ENCODE measurements at regions of chr1 and their contacts with region 1.

Region 1: GRCh38 chr1:12386130-12386529 is 156.3 kb downstream of the VPS13D start:
- DNase-seq: peak; percentile 48
- H3K4me3 Mint-ChIP-seq: peak overlapping the region; percentile 18
- H3K27ac Mint-ChIP-seq: peak overlapping the region; percentile 87
- H3K4me1 Mint-ChIP-seq: peaks cover 55% of the 10 kb centered on the region
- H3K27me3 Mint-ChIP-seq: no peaks in the 10 kb centered on the region
- CTCF ChIP-seq: no peak

Region 2: DNA sequence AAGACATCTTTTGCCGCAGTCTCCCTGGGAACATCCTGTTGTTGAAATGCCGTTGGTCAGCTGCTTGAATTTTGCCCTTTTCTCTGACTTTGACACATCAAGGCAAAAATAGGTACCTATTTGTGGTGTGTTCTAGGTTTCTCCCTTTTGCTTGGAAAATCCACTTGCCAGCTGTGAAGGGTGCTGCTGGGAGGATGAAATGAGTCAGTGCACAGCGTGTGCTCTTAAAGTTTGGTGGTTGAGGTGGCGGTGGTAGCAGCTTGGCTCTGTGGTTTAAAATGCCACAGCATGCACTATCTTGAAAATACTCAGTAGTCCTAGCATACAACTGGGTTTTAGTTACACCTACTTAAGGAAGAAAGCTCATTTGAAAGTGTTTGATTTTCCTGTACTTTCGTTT is 48.0 kb after region 1 on chr1:
- CTCF ChIA-PET with region 1: no interaction called
- intact Hi-C with region 1: loop called (anchors 1 kb)
- DNase-seq: no peak
- H3K4me3 Mint-ChIP-seq: no peak overlapping the region
- H3K27ac Mint-ChIP-seq: peak overlapping the region; percentile 89
- H3K4me1 Mint-ChIP-seq: peaks cover 46% of the 10 kb centered on the region
- H3K27me3 Mint-ChIP-seq: no peaks in the 10 kb centered on the region
- CTCF ChIP-seq: no peak

Region 3: DNA sequence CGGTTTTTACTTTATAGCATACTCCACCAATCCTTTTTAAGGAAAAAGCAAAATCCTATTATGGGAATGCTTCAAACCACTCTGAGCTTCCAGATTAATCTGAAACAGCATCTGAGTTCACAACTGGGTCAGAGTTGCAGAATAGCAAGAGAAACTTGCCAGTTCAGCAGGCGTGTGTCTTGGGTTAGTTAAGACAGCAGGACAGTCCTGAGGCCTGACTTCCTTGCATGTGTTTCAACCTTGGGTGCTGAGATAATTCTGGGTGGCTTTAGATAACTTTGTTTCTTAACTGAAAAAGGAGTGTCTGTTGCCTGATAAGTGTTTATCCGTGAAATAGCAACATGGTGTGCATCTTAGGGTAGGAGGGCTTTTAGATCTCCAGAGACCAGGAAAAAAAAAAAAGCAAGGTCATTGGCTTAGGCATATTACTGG is 62.6 kb after region 1 on chr1:
- CTCF ChIA-PET with region 1: no interaction called
- intact Hi-C with region 1: no loop called
- DNase-seq: no peak
- H3K4me3 Mint-ChIP-seq: no peak overlapping the region
- H3K27ac Mint-ChIP-seq: no peak overlapping the region
- H3K4me1 Mint-ChIP-seq: peaks cover 13% of the 10 kb centered on the region
- H3K27me3 Mint-ChIP-seq: no peaks in the 10 kb centered on the region
- CTCF ChIP-seq: no peak

Region 4: DNA sequence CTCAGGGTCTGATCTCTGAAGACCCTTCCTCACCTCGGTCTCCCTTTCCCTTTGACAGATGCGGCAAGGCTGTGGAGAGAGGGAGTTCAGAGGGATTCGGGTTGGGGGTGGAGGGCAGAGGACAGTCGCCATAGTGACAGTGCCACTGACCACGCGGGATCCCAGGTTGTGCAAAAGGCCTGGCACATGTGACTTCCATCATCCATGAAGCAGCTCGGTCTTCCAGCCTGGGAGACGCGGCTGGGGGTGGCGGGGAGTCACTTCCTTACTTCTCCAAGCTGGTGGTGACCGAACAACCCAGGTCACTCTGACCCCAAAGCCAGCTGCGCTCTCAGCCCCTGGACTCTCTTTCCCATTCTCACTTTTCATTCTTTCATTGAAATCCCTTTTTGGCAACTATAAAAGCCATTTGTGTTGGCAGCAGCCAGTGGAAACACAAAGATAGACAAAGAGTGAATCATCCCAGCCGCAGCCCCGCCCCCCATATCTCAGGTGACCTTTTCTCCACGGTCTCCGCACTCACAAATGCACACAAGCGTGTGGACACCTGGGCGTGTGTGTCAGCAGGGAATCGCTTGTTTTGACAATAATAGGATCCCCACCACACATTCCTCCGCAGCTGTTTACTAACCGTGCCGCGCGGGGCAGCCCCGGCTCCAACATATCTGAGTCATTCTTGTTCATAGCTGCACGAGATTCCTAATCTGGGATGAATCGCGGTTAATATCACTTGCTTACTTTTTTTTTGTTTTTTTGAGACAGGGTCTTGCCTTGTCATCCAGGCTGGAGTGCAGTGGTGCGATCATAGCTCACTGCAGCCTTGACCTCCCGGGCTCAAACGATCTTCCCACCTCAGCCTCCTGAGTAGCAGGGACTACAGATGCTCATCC is 163.6 kb after region 1 on chr1:
- CTCF ChIA-PET with region 1: no interaction called
- intact Hi-C with region 1: loop called (anchors 10 kb)
- DNase-seq: peak; percentile 86
- H3K4me3 Mint-ChIP-seq: peak overlapping the region; percentile 37
- H3K27ac Mint-ChIP-seq: peak overlapping the region; percentile 94
- H3K4me1 Mint-ChIP-seq: peaks cover 25% of the 10 kb centered on the region
- H3K27me3 Mint-ChIP-seq: no peaks in the 10 kb centered on the region
- CTCF ChIP-seq: no peak

Region 5: GRCh38 chr1:12604114-12604874 is 218.2 kb after region 1 on chr1:
- CTCF ChIA-PET with region 1: no interaction called
- intact Hi-C with region 1: no loop called
- DNase-seq: peak; percentile 74
- H3K4me3 Mint-ChIP-seq: peak overlapping the region; percentile 24
- H3K27ac Mint-ChIP-seq: peak overlapping the region; percentile 93
- H3K4me1 Mint-ChIP-seq: peaks cover 55% of the 10 kb centered on the region
- H3K27me3 Mint-ChIP-seq: no peaks in the 10 kb centered on the region
- CTCF ChIP-seq: no peak